Activated T-helper 2 cell treated with anti-CD3 and anti-CD28 coated beads, Interferon-gamma antibody, Interleukin-2, Interleukin-4, amounts not matched to agents 10 μg/mL and 5 μg/mL and 100 μg/mL, durations not matched to agents 14 hours and 24 hours and 36 hours (primary cell): ENCODE measurements at regions of chr2 and their contacts with region 1.

Region 1: DNA sequence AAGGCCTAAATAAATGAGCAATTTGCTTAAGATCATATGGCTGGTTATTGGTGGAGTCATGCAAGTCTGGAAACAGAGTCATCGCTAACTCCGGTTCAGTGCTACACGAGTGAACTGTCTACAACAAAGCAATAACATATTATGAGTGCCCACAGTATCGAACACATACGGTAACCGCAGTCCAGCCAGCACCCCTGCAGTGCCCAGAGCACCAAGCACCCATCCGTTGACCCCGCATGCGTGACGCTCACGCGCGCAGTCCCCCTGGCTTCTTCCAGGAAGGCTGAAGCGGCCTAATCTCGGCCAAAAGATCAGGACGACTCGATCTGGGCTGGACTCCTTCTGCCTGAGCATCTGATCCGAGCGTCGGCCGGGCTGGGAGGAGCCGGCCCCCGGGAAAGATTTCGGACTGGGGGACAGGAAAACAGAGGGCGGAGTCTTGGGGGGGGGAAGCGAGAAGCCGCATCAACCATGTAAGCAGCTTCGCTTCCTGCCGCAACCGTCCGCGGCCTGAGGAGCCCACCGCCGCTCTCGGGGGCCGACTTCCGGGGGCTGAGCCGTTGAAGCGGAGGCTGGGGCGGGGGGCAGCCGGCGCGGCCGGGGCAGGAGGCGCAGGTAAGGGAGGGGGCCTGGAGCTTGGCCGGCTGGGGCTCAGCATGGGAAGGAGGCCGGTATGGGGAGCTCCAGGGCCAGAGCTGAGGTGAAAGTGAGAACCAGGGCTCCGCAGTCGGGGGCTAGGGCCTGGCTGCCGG is at the start of gene PIKFYVE:
- DNase-seq: peak; percentile 89
- H3K4me3 Mint-ChIP-seq: peak within 1 kb of the TSS; percentile 92
- H3K27ac Mint-ChIP-seq: peak within 1 kb of the TSS; percentile 95
- H3K4me1 Mint-ChIP-seq: peaks cover 45% of the 10 kb centered on the region
- H3K27me3 Mint-ChIP-seq: no peaks in the 10 kb centered on the region
- total RNA-seq, gene PIKFYVE: 30.3 and 34.1 TPM in 2 replicates

Region 2: GRCh38 chr2:208156439-208156838 is 109.5 kb before region 1 on chr2:
- intact Hi-C with region 1: no loop called
- DNase-seq: no peak
- H3K4me3 Mint-ChIP-seq: no peak overlapping the region
- H3K27ac Mint-ChIP-seq: no peak overlapping the region
- H3K4me1 Mint-ChIP-seq: no peaks in the 10 kb centered on the region
- H3K27me3 Mint-ChIP-seq: peaks cover 7% of the 10 kb centered on the region

Region 3: GRCh38 chr2:208245746-208246145 is 20.2 kb before region 1 on chr2:
- intact Hi-C with region 1: no loop called
- DNase-seq: no peak
- H3K4me3 Mint-ChIP-seq: no peak overlapping the region
- H3K27ac Mint-ChIP-seq: no peak overlapping the region
- H3K4me1 Mint-ChIP-seq: peaks cover 13% of the 10 kb centered on the region
- H3K27me3 Mint-ChIP-seq: no peaks in the 10 kb centered on the region

Region 4: DNA sequence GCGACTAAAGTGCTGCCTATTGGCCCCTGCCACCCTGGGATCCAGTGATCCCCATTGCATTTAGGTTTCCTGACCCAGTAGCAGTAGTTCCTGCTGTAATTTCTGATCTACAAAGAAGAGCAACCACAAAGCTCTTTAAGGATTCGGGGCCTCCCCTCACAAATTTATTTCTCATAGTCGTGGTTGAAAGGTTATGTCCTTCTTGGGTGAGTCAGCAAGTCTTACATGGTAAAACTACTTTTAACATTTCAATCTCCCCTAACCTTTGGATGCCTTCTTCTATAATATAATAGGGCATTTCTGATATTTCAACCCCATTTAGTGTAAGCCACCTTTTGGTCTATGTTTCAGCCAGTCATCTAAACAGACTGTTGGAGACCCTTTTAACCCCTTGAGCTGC is 15.0 kb after region 1 on chr2:
- intact Hi-C with region 1: loop called (anchors 2 kb)
- DNase-seq: no peak
- H3K4me3 Mint-ChIP-seq: no peak overlapping the region
- H3K27ac Mint-ChIP-seq: peak overlapping the region; percentile 66
- H3K4me1 Mint-ChIP-seq: peaks cover 24% of the 10 kb centered on the region
- H3K27me3 Mint-ChIP-seq: no peaks in the 10 kb centered on the region

Region 5: DNA sequence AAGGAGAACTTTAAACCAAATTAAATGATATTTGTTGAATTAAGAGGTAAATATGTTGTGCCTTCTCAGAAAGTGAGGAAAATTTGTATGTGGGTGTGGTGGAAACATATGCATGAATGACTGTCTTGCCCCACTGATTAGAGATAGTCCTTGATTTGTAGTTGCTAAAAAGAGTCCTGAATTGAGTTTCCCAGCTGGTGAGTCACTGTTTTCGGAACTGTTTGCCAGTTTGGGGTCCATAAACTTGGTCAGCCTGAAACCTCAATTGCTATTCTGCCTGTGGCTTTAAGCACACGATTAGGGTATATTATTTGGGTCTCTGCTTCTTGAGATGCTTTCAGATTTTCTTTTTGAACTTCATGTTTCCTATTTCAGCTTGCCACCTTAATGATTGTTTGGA is 53.4 kb after region 1 on chr2:
- intact Hi-C with region 1: loop called (anchors 2 kb)
- DNase-seq: no peak
- H3K4me3 Mint-ChIP-seq: no peak overlapping the region
- H3K27ac Mint-ChIP-seq: peak overlapping the region; percentile 11
- H3K4me1 Mint-ChIP-seq: peaks cover 17% of the 10 kb centered on the region
- H3K27me3 Mint-ChIP-seq: no peaks in the 10 kb centered on the region